ENCODE measurements at regions of chr1 and their contacts with region 1.

Region 1: DNA sequence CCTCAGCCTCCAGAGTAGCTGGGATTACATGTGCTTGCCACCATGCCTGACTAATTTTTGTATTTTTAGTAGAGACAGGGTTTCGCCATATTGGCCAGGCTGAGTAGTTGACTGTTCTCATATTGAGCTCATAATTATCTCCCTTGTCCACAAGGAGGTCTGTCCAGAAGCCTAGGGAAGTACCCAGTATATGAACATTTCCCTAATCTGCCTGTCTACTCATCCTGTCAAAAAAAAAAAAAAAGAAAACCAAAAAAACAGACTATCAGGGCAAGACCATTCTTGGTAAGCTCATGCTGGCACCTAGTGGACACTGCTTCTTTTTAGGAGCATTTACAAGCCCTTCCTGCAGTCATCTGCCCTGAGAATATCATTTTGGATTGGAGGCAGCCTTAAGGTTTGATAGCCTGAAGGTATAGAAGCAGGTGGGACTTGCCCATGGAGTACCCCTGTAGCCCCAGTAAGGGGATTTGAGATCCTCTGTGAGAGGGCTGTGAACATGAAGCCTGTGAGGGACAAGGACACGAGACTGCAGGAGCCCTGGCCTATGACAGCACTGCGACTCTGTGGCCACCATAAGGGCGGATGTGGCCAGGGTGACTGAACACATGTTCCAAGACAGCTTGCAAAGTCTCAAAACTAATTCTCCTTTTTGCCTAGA is 10.8 kb upstream of the DUSP12 start:
- DNase-seq: no peak
- H3K4me3 ChIP-seq: no peak overlapping the region
- H3K27me3 ChIP-seq: no peaks in the 10 kb centered on the region
- CTCF ChIP-seq: peak; percentile 64

Region 2: GRCh38 chr1:161177112-161177935 is 561.4 kb before region 1 on chr1 and contains the start of gene B4GALT3:
- CTCF ChIA-PET with region 1: no interaction called
- POLR2A ChIA-PET with region 1: no interaction called
- DNase-seq: no peak
- H3K4me3 ChIP-seq: peak within 1 kb of the TSS; percentile 95
- H3K27me3 ChIP-seq: no peaks in the 10 kb centered on the region
- CTCF ChIP-seq: no peak
- polyA plus RNA-seq, gene B4GALT3: 24.7 and 39.0 TPM in 2 replicates

Region 3: DNA sequence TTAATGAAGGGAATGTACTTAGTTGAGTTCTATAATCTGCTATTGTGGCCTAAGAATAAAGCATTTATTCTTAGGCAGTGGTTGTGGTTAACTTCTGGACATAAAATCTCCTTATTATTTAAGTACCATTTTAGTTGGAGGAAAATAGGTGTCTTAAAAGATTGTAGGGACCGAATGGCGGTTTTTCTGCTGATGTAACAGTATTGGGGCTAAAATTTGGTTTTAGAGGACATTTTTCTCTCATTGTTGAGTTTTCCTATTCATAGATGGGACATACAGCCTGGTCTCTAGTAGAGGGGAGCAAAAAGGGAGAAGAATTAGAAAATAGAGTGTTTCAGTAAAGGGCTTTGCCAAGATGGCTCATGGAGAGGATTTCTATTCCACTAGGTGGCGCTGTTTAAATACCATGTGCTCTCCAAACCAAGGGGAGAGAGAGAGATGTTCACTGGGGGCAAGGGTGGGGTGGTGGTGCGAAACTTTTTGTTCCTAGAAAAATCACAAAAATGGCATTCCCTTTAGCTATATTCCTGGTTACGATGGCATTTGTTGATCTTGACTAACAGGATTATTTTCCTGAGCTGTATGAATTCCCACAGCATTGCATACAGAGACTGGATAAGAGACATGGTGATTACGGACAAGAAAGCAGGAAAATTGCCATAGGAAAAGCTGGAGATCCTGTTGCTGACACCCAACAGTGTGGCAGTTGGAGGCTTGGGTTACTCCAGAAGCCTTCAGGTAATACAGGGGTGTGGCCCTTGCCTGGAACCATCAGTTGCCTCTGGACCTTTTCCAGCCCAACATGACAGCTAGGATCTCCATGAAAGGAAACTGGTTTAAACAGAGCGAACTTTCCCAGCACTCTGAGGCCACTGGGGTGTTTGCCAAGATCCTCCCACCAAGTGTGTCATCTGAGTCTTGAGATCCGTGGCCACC is 251.7 kb before region 1 on chr1:
- CTCF ChIA-PET with region 1: interaction called, 13 read pairs
- POLR2A ChIA-PET with region 1: no interaction called
- DNase-seq: no peak
- H3K4me3 ChIP-seq: no peak overlapping the region
- H3K27me3 ChIP-seq: peaks cover 11% of the 10 kb centered on the region
- CTCF ChIP-seq: peak; percentile 66

Region 4: DNA sequence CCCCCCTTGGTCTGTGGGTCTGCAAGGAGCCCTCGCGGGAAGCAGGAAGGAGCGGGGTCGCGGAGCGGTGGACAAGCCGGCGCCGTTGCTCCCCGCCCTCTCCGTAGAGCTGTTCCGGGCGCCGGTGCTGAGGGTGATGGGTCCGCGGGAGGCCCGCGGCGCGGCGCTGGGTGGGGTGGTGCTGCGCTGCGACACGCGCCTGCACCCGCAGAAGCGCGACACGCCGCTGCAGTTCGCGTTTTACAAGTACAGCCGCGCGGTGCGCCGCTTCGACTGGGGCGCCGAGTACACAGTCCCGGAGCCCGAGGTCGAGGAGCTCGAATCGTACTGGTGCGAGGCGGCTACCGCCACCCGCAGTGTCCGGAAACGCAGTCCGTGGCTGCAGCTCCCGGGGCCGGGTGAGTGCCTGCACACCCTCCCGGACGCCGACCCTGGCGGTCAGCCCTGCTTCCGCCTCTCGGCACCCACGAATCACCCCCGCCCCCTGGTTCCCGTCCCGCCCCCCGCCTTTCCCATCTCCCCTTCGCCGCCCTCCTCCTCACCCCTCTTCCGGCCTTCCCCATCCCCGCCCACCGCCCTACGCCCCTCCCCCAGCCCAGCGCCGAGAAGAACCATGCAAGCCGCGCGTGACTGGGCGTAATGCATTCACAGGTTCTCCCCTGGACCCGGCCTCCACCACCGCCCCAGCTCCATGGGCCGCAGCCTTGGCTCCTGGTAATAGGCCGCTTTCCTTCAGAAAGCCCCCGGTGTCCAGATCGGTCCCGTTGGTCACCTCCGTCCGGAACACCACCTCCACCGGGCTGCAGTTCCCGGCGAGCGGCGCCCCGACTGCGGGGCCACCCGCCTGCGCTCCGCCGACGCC is 11.9 kb before region 1 on chr1:
- CTCF ChIA-PET with region 1: interaction called, 16 read pairs
- POLR2A ChIA-PET with region 1: no interaction called
- DNase-seq: no peak
- H3K4me3 ChIP-seq: peak overlapping the region; percentile 80
- H3K27me3 ChIP-seq: no peaks in the 10 kb centered on the region
- CTCF ChIP-seq: no peak

Region 5: DNA sequence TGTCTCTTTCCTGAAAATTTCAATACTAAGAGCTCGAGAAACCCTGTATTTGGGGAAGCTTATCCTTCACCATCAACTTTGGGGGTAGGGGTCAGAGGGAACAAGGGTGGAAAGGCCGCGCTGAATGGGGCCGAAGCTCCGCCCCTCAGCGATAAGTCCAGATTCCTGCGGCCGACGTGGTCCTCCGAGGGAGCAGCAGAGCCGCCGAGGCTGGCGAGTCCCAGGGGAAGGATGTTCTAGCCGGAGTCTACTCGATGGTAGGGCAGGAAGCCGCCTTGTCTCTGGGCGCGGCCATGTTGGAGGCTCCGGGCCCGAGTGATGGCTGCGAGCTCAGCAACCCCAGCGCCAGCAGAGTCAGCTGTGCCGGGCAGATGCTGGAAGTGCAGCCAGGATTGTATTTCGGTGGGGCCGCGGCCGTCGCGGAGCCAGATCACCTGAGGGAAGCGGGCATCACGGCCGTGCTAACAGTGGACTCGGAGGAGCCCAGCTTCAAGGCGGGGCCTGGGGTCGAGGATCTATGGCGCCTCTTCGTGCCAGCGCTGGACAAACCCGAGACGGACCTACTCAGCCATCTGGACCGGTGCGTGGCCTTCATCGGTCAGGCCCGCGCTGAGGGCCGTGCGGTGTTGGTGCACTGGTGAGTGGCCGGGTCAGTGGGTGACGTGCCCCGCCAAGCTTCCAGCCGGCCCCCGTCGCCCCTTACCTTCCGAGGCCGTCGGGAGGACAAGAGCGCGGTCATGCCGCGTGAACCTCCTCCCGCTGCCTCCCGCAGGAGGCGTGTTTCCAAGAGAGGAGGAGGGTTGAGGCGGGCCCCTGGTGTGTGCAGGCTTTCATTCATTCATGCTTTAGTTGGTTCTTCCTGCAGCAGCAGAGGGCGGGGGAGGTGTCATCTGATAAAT is 11.0 kb after region 1 on chr1 and contains the start of gene DUSP12:
- CTCF ChIA-PET with region 1: interaction called, 16 read pairs
- POLR2A ChIA-PET with region 1: no interaction called
- DNase-seq: peak; percentile 70
- H3K4me3 ChIP-seq: peak within 1 kb of the TSS; percentile 97
- H3K27me3 ChIP-seq: no peaks in the 10 kb centered on the region
- CTCF ChIP-seq: peak; percentile 33
- polyA plus RNA-seq, gene DUSP12: 28.1 and 34.1 TPM in 2 replicates